HepG2 (cell line): ENCODE measurements at regions of chr5 and their contacts with region 1.

Region 1: GRCh38 chr5:155004138-155004744 is 9.3 kb upstream of the KIF4B start:
- DNase-seq: peak; percentile 30
- ATAC-seq: peak; percentile 92
- H3K4me3 ChIP-seq: no peak overlapping the region
- H3K27ac ChIP-seq: no peak overlapping the region
- H3K4me1 ChIP-seq: peaks cover 28% of the 10 kb centered on the region
- H3K27me3 ChIP-seq: no peaks in the 10 kb centered on the region
- CTCF ChIP-seq: peak; percentile 93
- EP300 ChIP-seq: no peak
- POLR2A ChIP-seq: no peak
- RAD21 ChIP-seq: peak; percentile 65

Region 2: DNA sequence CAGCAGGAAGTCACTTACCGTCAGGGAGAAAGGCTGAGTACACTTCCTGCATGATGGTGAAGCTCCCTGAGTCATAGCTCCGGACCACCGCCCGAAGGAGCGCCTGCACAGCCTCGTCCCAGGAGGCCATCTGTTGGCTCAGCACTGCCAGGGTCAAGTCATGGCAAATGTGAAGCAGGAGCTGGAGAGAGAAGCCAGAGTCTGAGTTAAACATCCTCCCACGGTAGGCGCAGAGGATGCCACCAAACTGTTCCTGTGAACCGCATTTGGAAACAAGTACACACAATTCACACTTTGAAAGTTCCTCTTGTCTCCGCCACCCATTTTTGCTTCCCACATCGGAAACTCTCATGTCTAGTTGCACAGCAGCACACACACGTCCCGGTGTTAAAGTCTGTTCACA is 111.9 kb before region 1 on chr5:
- CTCF ChIA-PET with region 1: no interaction called
- POLR2A ChIA-PET with region 1: no interaction called
- in situ Hi-C with region 1: no loop called
- intact Hi-C with region 1: no loop called
- DNase-seq: no peak
- ATAC-seq: no peak
- H3K4me3 ChIP-seq: no peak overlapping the region
- H3K27ac ChIP-seq: no peak overlapping the region
- H3K4me1 ChIP-seq: no peaks in the 10 kb centered on the region
- H3K27me3 ChIP-seq: no peaks in the 10 kb centered on the region
- CTCF ChIP-seq: no peak
- EP300 ChIP-seq: no peak
- POLR2A ChIP-seq: no peak
- RAD21 ChIP-seq: no peak

Region 3: DNA sequence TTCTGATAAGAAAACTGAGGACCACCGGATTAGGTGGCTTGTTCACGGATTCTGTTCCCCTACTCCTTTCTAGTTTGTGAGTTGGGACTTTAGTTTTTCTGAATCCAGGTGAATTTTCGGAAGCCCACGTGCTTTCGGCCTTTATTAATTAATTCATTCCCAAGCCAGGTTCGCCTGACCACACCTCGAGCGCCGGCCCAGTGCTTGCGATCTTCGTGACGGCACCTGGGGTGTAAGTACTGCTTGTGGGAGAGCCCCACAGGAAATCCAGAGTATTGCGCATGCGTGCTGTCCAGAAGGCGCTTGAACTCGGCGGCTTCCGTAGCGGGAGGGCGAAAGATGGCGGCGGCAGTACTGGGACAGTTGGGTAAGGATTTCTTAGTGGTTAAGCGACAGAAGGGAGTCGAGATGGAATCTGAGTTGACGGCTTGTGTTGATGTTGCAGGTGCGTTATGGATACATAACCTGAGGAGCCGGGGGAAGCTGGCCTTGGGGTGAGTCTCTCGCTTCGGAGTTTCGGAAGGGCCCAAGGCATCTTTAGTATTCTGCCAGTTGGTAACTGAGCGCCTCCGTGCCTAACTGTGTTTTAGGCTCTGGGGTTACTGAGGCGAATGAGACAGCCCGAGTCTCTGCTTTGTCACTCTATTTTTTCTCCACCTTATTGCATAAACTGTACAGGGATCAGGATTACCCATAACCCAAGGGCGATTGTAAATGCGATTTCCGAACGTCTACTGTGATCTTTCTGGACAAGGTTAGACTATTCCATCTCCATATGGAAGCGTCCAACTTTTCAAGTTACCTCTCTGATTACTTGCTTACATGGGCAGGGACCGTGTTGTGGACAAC is 63.2 kb before region 1 on chr5 and contains the start of gene MRPL22:
- CTCF ChIA-PET with region 1: interaction called, 6 read pairs
- POLR2A ChIA-PET with region 1: no interaction called
- in situ Hi-C with region 1: no loop called
- intact Hi-C with region 1: loop called (anchors 5 kb)
- DNase-seq: peak; percentile 87
- ATAC-seq: peak; percentile 68
- H3K4me3 ChIP-seq: peak within 1 kb of the TSS; percentile 80 to 83 (median 82)
- H3K27ac ChIP-seq: peak within 1 kb of the TSS; percentile 78
- H3K4me1 ChIP-seq: peaks cover 51% of the 10 kb centered on the region
- H3K27me3 ChIP-seq: no peaks in the 10 kb centered on the region; a peak in 1 of 5 replicates
- CTCF ChIP-seq: no peak
- EP300 ChIP-seq: no peak
- POLR2A ChIP-seq: peak; percentile 83 to 84
- RAD21 ChIP-seq: no peak
- total RNA-seq, gene MRPL22: 84.8 and 118 TPM in 2 replicates

Region 4: DNA sequence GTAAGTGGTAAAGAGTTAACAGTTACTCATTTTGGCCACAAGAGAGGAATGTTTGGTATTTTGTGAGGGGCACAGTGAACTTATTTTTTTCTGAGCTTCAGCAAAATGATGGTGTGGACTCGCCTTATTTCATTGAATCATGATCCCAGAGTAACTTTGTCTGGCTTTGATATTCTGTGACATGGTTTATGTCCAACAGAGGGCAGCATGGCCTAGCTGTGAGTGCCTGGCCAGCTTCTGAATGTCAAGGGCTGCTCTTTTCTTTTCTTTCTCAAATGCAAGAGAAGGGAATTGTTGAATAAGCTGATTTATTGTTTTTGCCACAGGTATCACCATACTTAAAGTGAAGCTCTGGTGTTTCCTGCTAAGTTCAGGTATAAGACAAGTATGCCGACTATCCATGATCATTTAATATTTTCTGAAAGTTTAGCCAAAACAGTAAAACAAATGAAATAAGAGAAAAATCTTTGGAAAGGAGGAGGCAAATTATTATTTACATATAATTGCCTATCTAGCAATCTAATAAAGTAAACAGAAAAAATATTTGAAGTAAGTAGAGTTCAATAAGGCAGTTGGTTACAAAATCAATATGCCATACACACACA is 31.7 kb before region 1 on chr5:
- CTCF ChIA-PET with region 1: interaction called, 17 read pairs
- POLR2A ChIA-PET with region 1: no interaction called
- in situ Hi-C with region 1: no loop called
- intact Hi-C with region 1: loop called (anchors 1 kb)
- DNase-seq: peak; percentile 35
- ATAC-seq: peak; percentile 66
- H3K4me3 ChIP-seq: no peak overlapping the region
- H3K27ac ChIP-seq: no peak overlapping the region
- H3K4me1 ChIP-seq: peaks cover 19% of the 10 kb centered on the region
- H3K27me3 ChIP-seq: no peaks in the 10 kb centered on the region
- CTCF ChIP-seq: peak; percentile 76
- EP300 ChIP-seq: no peak
- POLR2A ChIP-seq: no peak
- RAD21 ChIP-seq: peak; percentile 54; the same call in 1 of the 2 replicates